ENCODE measurements at regions of chr14 and their contacts with region 1.

Region 1: DNA sequence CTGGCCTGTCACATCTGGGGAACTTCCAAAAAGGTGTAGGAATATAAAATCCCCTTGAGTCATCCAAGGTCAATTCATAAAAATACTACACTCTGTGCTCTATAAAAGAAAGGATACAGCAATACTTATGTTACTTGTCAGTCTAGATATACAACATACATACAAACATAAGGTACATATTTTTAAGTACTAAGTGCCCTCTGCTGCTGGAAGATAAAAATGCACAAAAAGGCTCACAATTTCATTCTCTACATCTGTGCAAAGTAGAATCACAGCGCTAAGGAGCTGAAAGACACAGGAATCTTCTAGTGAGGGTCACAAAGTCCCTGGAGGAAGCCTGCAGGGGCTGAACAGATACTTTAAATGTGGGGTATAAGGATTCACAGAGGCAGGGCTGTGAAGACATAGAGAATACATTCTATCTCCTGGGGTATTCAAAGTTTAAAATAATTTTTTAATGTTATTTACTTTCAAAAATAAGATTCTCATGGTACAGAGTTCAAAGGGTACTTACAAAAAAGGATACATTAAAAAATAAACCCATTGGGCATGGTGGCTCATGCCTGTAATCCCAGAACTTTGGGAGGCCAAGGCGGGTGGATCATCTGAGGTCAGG is 10.2 kb upstream of the GOLGA5 start:
- DNase-seq: no peak
- H3K4me3 Mint-ChIP-seq: no peak overlapping the region
- H3K27ac Mint-ChIP-seq: no peak overlapping the region
- H3K4me1 Mint-ChIP-seq: peaks cover 14% of the 10 kb centered on the region
- H3K27me3 Mint-ChIP-seq: no peaks in the 10 kb centered on the region

Region 2: DNA sequence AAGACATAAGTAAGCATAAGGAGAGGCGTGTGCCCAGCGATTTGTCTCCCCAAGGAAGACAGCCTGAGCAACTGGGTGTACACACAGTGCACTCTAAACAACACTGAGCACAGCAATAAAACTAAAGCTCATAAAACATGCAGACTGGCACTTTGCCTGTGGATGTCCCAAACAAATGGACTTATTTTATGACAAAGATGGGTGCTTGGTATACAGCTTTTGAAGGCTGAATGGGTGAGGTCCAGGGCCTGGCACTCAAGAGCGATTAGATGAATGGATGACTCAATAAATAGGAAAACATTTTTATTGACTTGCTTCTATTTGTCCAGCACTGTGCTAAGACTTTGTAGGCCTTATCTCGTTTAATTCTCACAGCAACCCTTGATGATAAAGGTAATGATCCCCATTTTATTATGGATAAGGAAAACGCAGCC is 64.0 kb before region 1 on chr14:
- CTCF ChIA-PET with region 1: interaction called, 142 read pairs
- POLR2A ChIA-PET with region 1: no interaction called
- intact Hi-C with region 1: no loop called
- DNase-seq: no peak
- H3K4me3 Mint-ChIP-seq: no peak overlapping the region
- H3K27ac Mint-ChIP-seq: no peak overlapping the region
- H3K4me1 Mint-ChIP-seq: peaks cover 8% of the 10 kb centered on the region
- H3K27me3 Mint-ChIP-seq: peaks cover 2% of the 10 kb centered on the region

Measured in activated CD4-positive, alpha-beta memory T cell treated with anti-CD3 and anti-CD28 coated beads for 36 hours (primary cell).